Common myeloid progenitor, CD34-positive (primary cell): ENCODE measurements at regions of chr16 and their contacts with region 1.

Region 1: GRCh38 chr16:66357153-66357928 is 9.2 kb upstream of the CDH5 start:
- DNase-seq: peak; percentile 48 to 57 (median 49)
- H3K4me3 ChIP-seq: no peak overlapping the region
- H3K27ac ChIP-seq: no peak overlapping the region
- H3K4me1 ChIP-seq: peaks cover 0 to 37% (median 24%) of the 10 kb centered on the region in 4 experiments
- H3K27me3 ChIP-seq: peaks cover 0 to 3% (median 0%) of the 10 kb centered on the region in 5 experiments

Region 2: DNA sequence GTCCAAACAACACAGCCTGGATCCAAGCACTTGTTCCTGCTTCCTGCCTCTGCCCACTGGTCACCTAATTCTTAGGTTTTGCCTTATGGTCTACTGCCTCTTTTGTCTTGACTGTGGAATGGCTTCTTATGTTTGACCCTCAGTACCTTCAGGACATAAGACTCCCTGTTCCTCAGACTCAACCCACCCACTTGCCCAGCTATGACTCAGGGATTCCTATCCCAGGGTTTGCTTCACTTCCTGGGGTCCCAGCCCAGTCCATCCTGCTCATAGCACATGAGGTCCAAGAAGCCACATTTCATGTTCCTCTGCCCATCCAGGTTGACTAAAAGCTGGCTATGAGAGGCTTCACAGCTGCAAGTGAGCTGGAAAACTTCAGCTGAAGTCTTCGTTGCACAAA is 311.7 kb before region 1 on chr16:
- CTCF ChIA-PET with region 1: no interaction called
- POLR2A ChIA-PET with region 1: no interaction called
- DNase-seq: no peak
- H3K4me3 ChIP-seq: no peak overlapping the region
- H3K27ac ChIP-seq: no peak overlapping the region
- H3K4me1 ChIP-seq: no peaks in the 10 kb centered on the region
- H3K27me3 ChIP-seq: peaks cover 0 to 5% (median 0%) of the 10 kb centered on the region in 5 experiments

Region 3: DNA sequence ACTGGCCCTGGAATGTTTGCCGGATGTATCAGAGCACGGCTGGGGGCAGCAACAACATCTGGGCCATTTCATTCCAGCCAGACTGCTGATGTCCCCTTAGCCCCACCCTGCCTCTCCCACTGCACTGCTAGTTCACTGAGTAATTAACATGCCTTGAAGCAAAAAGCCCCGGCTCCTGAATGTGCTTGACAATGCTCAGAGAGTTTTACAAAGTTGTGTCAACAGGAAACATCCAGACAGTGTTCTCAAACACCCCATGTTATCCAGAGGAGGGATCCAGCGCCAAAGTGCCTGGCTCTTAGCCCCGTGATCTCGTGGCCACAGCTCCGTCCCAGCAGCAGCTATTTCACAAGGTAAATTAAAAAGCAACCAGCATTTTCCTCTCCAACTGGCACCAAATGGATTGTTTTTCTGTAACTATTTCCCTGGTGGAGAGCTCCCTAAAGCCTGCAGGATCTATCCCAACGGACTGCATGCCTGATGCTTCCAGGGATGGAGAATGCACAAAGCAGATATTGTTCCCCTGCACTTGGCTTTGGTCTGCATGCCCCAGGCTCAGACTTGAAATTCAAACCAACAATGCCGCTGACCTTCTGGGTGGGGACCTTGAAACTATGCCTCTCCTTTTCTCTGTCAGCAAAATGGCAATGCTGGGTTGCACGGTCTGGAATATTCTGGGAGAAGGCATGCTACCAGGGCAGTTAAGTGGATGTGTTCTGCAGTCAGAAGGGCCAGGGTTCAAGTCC is 106.5 kb before region 1 on chr16:
- CTCF ChIA-PET with region 1: no interaction called
- POLR2A ChIA-PET with region 1: no interaction called
- DNase-seq: no peak
- H3K4me3 ChIP-seq: no peak overlapping the region
- H3K27ac ChIP-seq: no peak overlapping the region
- H3K4me1 ChIP-seq: no peaks in the 10 kb centered on the region
- H3K27me3 ChIP-seq: peaks cover 0 to 2% (median 0%) of the 10 kb centered on the region in 5 experiments

Region 4: GRCh38 chr16:66304151-66304550 is 53.2 kb before region 1 on chr16:
- CTCF ChIA-PET with region 1: no interaction called
- POLR2A ChIA-PET with region 1: no interaction called
- DNase-seq: no peak
- H3K4me3 ChIP-seq: no peak overlapping the region
- H3K27ac ChIP-seq: no peak overlapping the region
- H3K4me1 ChIP-seq: peaks cover 0 to 6% (median 2%) of the 10 kb centered on the region in 4 experiments
- H3K27me3 ChIP-seq: peaks cover 0 to 4% (median 0%) of the 10 kb centered on the region in 5 experiments

Region 5: GRCh38 chr16:66370786-66371684 is 13.7 kb after region 1 on chr16:
- CTCF ChIA-PET with region 1: interaction called, 20 read pairs
- POLR2A ChIA-PET with region 1: no interaction called
- DNase-seq: no peak
- H3K4me3 ChIP-seq: no peak overlapping the region
- H3K27ac ChIP-seq: no peak overlapping the region
- H3K4me1 ChIP-seq: peaks cover 0 to 52% (median 33%) of the 10 kb centered on the region in 4 experiments
- H3K27me3 ChIP-seq: no peaks in the 10 kb centered on the region